GM18951 (cell line): ENCODE measurements at regions of chr1 and their contacts with region 1.

Region 1: DNA sequence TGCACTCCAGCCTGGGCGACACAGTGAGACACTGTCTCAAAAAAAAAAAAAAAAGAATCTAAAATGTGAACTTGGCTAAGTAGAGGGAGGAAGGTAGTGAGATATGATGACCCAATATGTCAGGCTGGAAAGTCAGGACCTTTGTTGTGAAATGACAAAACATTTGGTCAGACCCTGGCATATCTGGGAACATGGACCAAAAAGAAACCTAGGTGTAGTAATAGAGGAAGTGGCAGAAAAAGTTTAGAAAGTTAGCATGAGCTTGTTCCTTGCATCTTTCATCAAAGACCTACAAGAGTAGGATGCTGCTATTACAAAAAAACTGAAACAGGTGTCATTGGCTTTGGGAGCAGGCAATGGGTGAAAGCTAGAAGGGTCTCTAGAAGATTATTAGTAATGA is 7.3 kb upstream of the S100A3 start:
- POLR2A ChIP-seq: no peak

Region 2: DNA sequence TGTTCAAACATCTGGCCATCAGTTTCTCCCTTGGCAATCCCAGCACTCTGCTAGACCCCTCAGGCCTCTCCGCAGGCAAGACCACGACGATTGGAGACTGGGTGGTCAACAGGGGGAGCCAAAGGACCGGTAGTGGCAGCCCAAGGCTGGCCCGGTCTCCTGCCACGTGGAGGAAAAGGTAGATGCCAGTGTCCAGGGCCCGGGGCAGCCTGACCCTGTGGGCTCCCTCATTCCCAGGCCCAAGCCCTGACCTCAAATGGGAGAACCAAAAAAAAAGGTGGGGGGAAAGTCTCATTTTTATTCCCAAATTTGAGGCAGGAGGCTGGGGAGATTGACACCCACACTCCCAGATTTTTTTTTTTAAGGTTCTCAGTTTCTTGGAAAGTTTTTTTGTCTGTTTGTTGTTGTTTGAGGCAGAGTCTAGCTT is 45.4 kb before region 1 on chr1:
- in situ Hi-C with region 1: loop called (anchors 5 kb)
- POLR2A ChIP-seq: no peak

Region 3: GRCh38 chr1:154198756-154199562 is 642.6 kb after region 1 on chr1:
- in situ Hi-C with region 1: no loop called
- POLR2A ChIP-seq: no peak